ENCODE measurements at regions of chr14 and their contacts with region 1.

Region 1: DNA sequence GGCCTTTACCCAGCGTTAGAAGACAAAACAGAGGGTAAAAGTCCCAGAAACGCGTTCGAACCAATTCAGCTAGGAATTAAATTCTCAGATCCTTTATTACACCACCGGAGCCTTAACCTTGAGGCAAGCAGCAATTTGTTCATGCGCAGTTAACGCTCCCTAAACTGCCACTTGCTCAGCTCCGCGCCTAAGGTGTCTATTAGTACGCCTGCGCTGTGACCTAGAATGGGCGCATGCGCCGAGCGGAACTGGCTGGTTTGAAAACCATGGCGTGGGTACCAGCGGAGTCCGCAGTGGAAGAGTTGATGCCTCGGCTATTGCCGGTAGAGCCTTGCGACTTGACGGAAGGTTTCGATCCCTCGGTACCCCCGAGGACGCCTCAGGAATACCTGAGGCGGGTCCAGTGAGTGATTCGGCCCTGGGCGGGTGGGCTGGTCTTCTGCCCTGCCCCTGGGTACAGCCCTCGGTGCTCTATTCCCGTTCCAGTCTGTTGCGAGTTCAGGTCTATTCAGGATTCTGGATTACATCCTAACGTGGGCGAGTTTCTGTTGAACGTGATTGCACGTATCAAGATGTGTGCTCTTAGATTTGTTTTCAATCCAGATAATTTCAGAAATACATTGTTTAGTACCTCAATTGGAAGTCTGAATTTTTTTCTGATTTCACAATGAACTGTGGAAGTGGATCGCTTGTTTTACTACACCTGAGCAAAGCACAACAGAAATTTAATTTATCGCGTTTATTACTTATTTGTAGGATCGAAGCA is at the start of gene GEMIN2:
- DNase-seq: peak; percentile 97
- ATAC-seq: peak; percentile 99
- H3K4me3 ChIP-seq: peak within 1 kb of the TSS; percentile 71 to 90 (median 76)
- H3K27ac ChIP-seq: peak within 1 kb of the TSS; percentile 40
- H3K4me1 ChIP-seq: peaks cover 33% of the 10 kb centered on the region
- H3K27me3 ChIP-seq: no peaks in the 10 kb centered on the region; a peak in 1 of 5 replicates
- CTCF ChIP-seq: peak; percentile 26
- EP300 ChIP-seq: peak in 1 of 2 experiments; percentile 13; a peak in 2 of 4 replicates
- POLR2A ChIP-seq: peak; percentile 89 to 99; a peak in 3 of 4 replicates
- RAD21 ChIP-seq: peak; percentile 29; the same call in 1 of the 2 replicates
- total RNA-seq, gene GEMIN2: 110 and 160 TPM in 2 replicates

Region 2: GRCh38 chr14:39097159-39097558 is 17.1 kb before region 1 on chr14:
- CTCF ChIA-PET with region 1: no interaction called
- POLR2A ChIA-PET with region 1: interaction called, 242 read pairs
- in situ Hi-C with region 1: no loop called
- intact Hi-C with region 1: no loop called
- DNase-seq: peak; percentile 90
- ATAC-seq: peak; percentile 70
- H3K4me3 ChIP-seq: 0 out of 6 replicates have a peak overlapping the region, but pooled peaks of 1 of the 3 experiments have one; percentile 2
- H3K27ac ChIP-seq: peak overlapping the region; percentile 36
- H3K4me1 ChIP-seq: peaks cover 76% of the 10 kb centered on the region
- H3K27me3 ChIP-seq: no peaks in the 10 kb centered on the region; a peak in 1 of 5 replicates
- CTCF ChIP-seq: no peak
- EP300 ChIP-seq: peak in 1 of 2 experiments; percentile 20; a peak in 2 of 4 replicates
- POLR2A ChIP-seq: peak in 1 of 2 experiments; percentile 33; a peak in 1 of 4 replicates
- RAD21 ChIP-seq: no peak

Region 3: DNA sequence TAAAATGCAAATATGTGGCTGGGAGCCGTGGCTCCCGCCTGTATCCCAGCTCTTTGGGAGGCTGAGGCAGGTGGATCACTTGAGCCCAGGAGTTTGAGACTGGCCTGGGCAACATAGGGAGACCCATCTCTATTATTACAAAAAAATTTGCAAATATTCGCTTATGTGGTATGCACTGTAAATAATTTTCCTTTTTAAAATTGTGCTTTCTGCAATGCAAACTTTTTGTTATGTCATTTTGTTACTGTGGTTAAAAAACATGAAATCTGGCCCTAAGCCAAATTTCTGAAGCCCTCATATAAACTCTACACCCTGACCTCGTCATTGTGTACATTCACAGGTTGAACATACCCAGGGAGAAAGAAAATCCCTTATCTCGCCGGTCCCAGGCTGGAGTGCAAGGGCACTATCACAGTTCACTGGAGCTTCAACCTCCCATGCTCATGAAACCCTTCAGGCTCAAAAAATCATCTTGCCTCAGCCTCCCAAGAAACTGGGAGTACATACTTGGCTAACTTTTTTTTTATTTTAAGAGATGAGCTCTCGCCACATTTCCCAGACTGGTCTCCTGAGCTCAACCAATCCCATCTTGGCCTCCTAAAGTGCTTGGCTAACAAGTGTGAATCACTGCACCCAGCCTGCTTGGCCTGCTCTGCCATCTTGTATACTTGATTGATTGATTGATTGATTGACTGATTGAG is 31.2 kb after region 1 on chr14:
- CTCF ChIA-PET with region 1: no interaction called
- POLR2A ChIA-PET with region 1: interaction called, 5 read pairs
- in situ Hi-C with region 1: no loop called
- intact Hi-C with region 1: loop called (anchors 2 kb)
- DNase-seq: peak; percentile 93
- ATAC-seq: peak; percentile 99
- H3K4me3 ChIP-seq: no peak overlapping the region
- H3K27ac ChIP-seq: peak overlapping the region; percentile 47
- H3K4me1 ChIP-seq: peaks cover 13% of the 10 kb centered on the region
- H3K27me3 ChIP-seq: no peaks in the 10 kb centered on the region
- CTCF ChIP-seq: no peak
- EP300 ChIP-seq: peak in 1 of 2 experiments; percentile 63; a peak in 3 of 4 replicates
- POLR2A ChIP-seq: 0 out of 4 replicates have a peak, but pooled peaks of 1 of the 2 experiments have one; percentile 3
- RAD21 ChIP-seq: peak; percentile 39; the same call in 1 of the 2 replicates

Measured in HepG2 (cell line).